ENCODE measurements at regions of chr9 and their contacts with region 1.

Region 1: GRCh38 chr9:91422758-91423711 is 597 bp downstream of the NFIL3 start:
- ATAC-seq: peak; percentile 2 to 34 (median 24)
- H3K4me3 ChIP-seq: peak overlapping the region; percentile 59 to 92 (median 89)
- H3K27ac ChIP-seq: peak overlapping the region; percentile 92 to 97
- H3K4me1 ChIP-seq: peaks cover 12 to 25% of the 10 kb centered on the region in 2 donors

Region 2: DNA sequence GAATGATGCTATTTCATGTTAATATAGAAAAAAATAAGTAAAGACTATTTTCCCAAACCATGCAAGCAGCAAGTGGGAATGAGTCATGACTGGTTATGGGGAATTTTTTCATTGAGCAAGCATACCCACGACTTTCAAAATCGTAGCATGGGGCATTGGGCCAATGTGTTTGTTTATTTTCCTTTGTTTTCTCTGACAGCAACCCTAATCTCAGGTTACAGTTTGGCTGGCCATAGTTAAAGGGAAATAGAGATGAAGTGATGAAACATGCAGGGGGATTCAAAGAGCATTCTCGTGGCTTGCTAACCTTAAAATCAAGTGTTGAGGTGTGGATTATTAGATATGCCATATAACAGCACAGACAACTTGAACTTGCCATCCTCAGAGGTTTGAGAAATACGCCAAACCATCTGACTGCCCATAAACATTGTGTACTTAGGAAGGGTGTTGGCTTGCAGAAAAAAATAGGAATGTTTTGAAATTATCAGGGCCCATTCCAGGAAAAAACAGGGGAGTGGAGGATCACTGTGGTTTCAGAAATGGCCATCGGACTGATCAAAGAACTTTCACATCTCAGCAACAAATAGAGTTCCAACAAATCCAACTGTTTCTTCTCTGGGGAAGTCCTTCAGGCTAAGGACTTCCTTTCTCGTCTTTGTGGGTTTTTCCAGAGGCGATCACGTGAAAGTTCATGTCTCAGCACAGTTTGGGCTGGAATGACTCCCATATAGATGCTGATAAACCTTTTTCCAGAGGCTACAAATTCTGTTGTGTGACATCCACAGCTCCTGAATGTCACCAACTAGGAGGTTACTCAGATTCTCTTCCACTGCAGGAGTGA is 362.3 kb before region 1 on chr9:
- in situ Hi-C with region 1: loop called in 1 of 9 experiments (anchors 25 kb)
- ATAC-seq: peak in 4 of 8 experiments; percentile 49 to 85 (median 76)
- H3K4me3 ChIP-seq: no peak overlapping the region
- H3K27ac ChIP-seq: no peak overlapping the region
- H3K4me1 ChIP-seq: no peaks in the 10 kb centered on the region

Region 3: DNA sequence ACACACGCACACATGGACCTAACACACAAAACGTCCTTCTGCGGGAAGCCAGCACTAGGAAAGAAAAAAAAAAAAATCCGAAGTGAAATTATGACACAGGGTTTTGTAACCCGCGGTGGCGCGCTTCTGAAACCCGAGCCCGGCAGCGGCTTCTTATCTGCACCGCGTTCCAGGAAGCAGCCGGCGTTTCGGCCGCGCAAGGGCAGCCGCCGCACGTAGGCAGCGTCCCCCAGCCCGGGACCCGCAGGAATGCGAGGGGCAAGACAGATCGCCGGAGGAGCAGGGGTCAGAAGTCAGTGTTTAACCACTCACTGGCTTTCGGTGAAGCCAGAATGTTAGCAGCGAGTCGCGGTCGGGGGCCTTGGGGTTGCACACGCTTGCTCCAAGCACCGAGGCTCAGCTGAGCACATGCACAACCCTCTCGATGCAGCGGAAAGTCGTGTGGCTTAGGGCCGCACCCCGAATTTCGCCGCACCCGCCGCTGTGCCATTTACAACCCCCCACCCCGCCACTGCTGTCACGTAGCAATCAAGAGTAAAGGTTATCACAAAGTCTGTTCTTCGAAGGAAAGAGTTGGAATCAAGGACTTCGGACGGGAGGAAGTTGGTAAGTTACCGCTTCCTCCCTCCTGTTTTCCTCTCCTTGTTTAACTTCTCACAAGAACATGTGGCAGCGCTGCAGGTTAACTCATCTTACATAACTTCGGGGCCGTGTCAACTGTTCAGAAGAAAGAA is 229.2 kb before region 1 on chr9:
- in situ Hi-C with region 1: loop called in 1 of 9 experiments (anchors 25 kb)
- ATAC-seq: peak; percentile 12 to 50 (median 30)
- H3K4me3 ChIP-seq: peak overlapping the region; percentile 15 to 33 (median 18)
- H3K27ac ChIP-seq: peak overlapping the region; percentile 54 to 71
- H3K4me1 ChIP-seq: peaks cover 33 to 44% of the 10 kb centered on the region in 2 donors

Region 4: GRCh38 chr9:91207729-91208418 is 215.2 kb before region 1 on chr9:
- in situ Hi-C with region 1: no loop called
- ATAC-seq: peak in 3 of 8 experiments; percentile 50 to 78 (median 58)
- H3K4me3 ChIP-seq: no peak overlapping the region
- H3K27ac ChIP-seq: no peak overlapping the region
- H3K4me1 ChIP-seq: no peaks in the 10 kb centered on the region

Region 5: GRCh38 chr9:91301161-91301560 is 121.9 kb before region 1 on chr9:
- in situ Hi-C with region 1: loop called in 1 of 9 experiments (anchors 25 kb)
- ATAC-seq: no peak
- H3K4me3 ChIP-seq: no peak overlapping the region
- H3K27ac ChIP-seq: no peak overlapping the region
- H3K4me1 ChIP-seq: peaks cover 0 to 9% of the 10 kb centered on the region in 2 donors

Region 6: GRCh38 chr9:91474656-91475055 is 51.6 kb after region 1 on chr9:
- in situ Hi-C with region 1: no loop called
- ATAC-seq: peak in 2 of 8 experiments; percentile 60 to 85
- H3K4me3 ChIP-seq: no peak overlapping the region
- H3K27ac ChIP-seq: no peak overlapping the region
- H3K4me1 ChIP-seq: no peaks in the 10 kb centered on the region

Region 7: GRCh38 chr9:92696619-92697018 is 1273.6 kb after region 1 on chr9:
- in situ Hi-C with region 1: no loop called
- ATAC-seq: no peak
- H3K4me3 ChIP-seq: no peak overlapping the region
- H3K27ac ChIP-seq: no peak overlapping the region
- H3K4me1 ChIP-seq: no peaks in the 10 kb centered on the region

Measured in motor neuron (in vitro differentiated cells).